GM12878 (cell line): ENCODE measurements at regions of chr12 and their contacts with region 1.

Region 1: GRCh38 chr12:71663561-71664294 is at the start of gene ZFC3H1:
- DNase-seq: peak; percentile 99
- ATAC-seq: peak; percentile 89
- H3K4me3 ChIP-seq: peak within 1 kb of the TSS; percentile 99
- H3K27ac ChIP-seq: peak within 1 kb of the TSS; percentile 85
- H3K4me1 ChIP-seq: 0 out of 2 replicates have a peak, but pooled peaks cover 6% of the 10 kb centered on the region
- H3K27me3 ChIP-seq: no peaks in the 10 kb centered on the region
- CTCF ChIP-seq: peak; percentile 26 to 43 (median 30); a peak in 4 of 6 replicates
- EP300 ChIP-seq: no peak
- POLR2A ChIP-seq: peak; percentile 85
- RAD21 ChIP-seq: no peak
- polyA plus RNA-seq, gene ZFC3H1: 11.2 to 14.6 TPM

Region 2: GRCh38 chr12:71602745-71603577 is 60.8 kb before region 1 on chr12:
- CTCF ChIA-PET with region 1: no interaction called
- POLR2A ChIA-PET with region 1: no interaction called
- RAD21 ChIA-PET with region 1: no interaction called
- SMC1A ChIA-PET with region 1: no interaction called
- in situ Hi-C with region 1: no loop called
- intact Hi-C with region 1: no loop called
- DNase-seq: no peak
- ATAC-seq: no peak
- H3K4me3 ChIP-seq: no peak overlapping the region
- H3K27ac ChIP-seq: no peak overlapping the region
- H3K4me1 ChIP-seq: no peaks in the 10 kb centered on the region
- H3K27me3 ChIP-seq: no peaks in the 10 kb centered on the region
- CTCF ChIP-seq: no peak
- EP300 ChIP-seq: no peak
- POLR2A ChIP-seq: no peak
- RAD21 ChIP-seq: no peak

Region 3: DNA sequence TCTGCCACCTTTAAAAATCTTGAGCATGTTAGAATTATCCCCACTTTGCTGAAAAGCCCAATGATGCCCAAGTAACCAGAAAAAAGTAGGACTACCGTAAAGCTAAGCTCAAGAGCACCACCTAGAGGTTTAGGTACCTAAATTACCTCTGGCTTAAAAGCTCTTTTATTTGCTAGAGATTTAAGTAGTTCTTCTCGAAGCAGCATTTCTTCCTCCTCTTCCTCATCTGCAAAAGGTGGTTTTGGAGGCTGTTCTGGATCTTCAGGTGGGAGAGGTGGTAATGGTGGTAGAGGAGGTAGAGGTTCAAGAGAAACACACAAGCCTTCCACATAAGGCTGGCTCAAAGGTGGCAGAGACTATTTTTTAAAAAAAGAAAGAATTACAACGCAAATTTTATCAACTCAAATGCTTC is 27.0 kb before region 1 on chr12:
- CTCF ChIA-PET with region 1: interaction called, 19 read pairs
- POLR2A ChIA-PET with region 1: interaction called, 3 read pairs
- RAD21 ChIA-PET with region 1: interaction called, 12 read pairs
- SMC1A ChIA-PET with region 1: interaction called, 3 read pairs
- in situ Hi-C with region 1: no loop called
- intact Hi-C with region 1: no loop called
- DNase-seq: peak; percentile 12
- ATAC-seq: peak; percentile 81
- H3K4me3 ChIP-seq: no peak overlapping the region
- H3K27ac ChIP-seq: no peak overlapping the region
- H3K4me1 ChIP-seq: no peaks in the 10 kb centered on the region; the same call in 1 of the 2 replicates
- H3K27me3 ChIP-seq: no peaks in the 10 kb centered on the region
- CTCF ChIP-seq: peak; percentile 65 to 73 (median 71)
- EP300 ChIP-seq: no peak
- POLR2A ChIP-seq: no peak
- RAD21 ChIP-seq: peak; percentile 63

Region 4: GRCh38 chr12:71754461-71755145 is 90.9 kb after region 1 on chr12 and contains the start of gene RAB21:
- CTCF ChIA-PET with region 1: interaction called, 31 read pairs
- POLR2A ChIA-PET with region 1: interaction called, 20 read pairs
- RAD21 ChIA-PET with region 1: interaction called, 5 read pairs
- SMC1A ChIA-PET with region 1: interaction called, 5 read pairs
- in situ Hi-C with region 1: no loop called
- intact Hi-C with region 1: loop called (anchors 1 kb)
- DNase-seq: peak; percentile 70
- ATAC-seq: peak; percentile 92
- H3K4me3 ChIP-seq: peak within 1 kb of the TSS; percentile 96
- H3K27ac ChIP-seq: peak within 1 kb of the TSS; percentile 94
- H3K4me1 ChIP-seq: peaks cover 4% of the 10 kb centered on the region
- H3K27me3 ChIP-seq: no peaks in the 10 kb centered on the region; a peak in 1 of 4 replicates
- CTCF ChIP-seq: 0 out of 6 replicates have a peak, but pooled peaks of 1 of the 3 experiments have one; percentile 12
- EP300 ChIP-seq: no peak
- POLR2A ChIP-seq: peak; percentile 93
- RAD21 ChIP-seq: 0 out of 2 replicates have a peak, but pooled peaks have one; percentile 1
- polyA plus RNA-seq, gene RAB21: 5.3 to 8.2 TPM

Region 5: DNA sequence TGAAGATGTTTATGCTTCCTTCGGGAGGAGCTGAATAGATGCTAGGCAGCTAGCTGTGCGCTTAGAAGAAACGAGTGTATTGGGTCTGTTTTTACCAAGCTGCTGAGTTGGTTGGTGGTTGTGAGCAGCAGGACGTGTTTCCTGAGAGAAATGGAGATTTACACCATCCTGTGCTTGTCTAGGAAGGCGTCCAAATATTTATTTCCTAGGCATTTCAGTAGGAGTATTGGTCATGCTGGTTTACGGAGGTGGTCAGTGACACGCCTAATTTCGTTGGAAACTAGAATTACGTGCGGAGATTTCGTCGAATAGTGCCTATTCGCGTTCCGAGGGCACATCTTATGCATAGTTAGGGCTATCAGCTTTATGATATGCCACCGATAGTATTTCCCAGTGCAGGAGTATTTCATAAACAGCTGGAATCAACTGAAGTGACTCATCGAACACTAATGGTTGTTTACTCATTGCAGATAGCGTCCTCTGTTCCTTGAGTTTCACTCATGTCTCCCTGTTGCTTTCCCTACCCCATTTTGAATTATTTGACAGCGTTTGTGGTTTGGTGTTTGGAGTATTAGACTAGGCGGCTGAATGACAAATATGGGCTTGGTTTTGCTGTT is 176.6 kb after region 1 on chr12:
- CTCF ChIA-PET with region 1: no interaction called
- POLR2A ChIA-PET with region 1: interaction called, 3 read pairs
- RAD21 ChIA-PET with region 1: no interaction called
- SMC1A ChIA-PET with region 1: no interaction called
- in situ Hi-C with region 1: loop called (anchors 5 kb)
- intact Hi-C with region 1: no loop called
- DNase-seq: no peak
- ATAC-seq: peak; percentile 34
- H3K4me3 ChIP-seq: peak overlapping the region; percentile 86
- H3K27ac ChIP-seq: peak overlapping the region; percentile 81
- H3K4me1 ChIP-seq: peaks cover 10% of the 10 kb centered on the region; the same call in 1 of the 2 replicates
- H3K27me3 ChIP-seq: no peaks in the 10 kb centered on the region
- CTCF ChIP-seq: no peak
- EP300 ChIP-seq: no peak
- POLR2A ChIP-seq: no peak
- RAD21 ChIP-seq: no peak